ENCODE measurements at regions of chr3 and their contacts with region 1.

Region 1: GRCh38 chr3:193592944-193593667 is at the start of gene OPA1:
- DNase-seq: peak; percentile 96
- H3K4me3 Mint-ChIP-seq: peak within 1 kb of the TSS; percentile 93
- H3K27ac Mint-ChIP-seq: peak within 1 kb of the TSS; percentile 98
- H3K4me1 Mint-ChIP-seq: peaks cover 46% of the 10 kb centered on the region
- H3K27me3 Mint-ChIP-seq: no peaks in the 10 kb centered on the region
- total RNA-seq, gene OPA1: 91.7 to 96.0 TPM

Region 2: GRCh38 chr3:192887047-192887446 is 706.1 kb before region 1 on chr3:
- CTCF ChIA-PET with region 1: no interaction called
- intact Hi-C with region 1: loop called (anchors 5 kb)
- DNase-seq: peak; percentile 36
- H3K4me3 Mint-ChIP-seq: no peak overlapping the region
- H3K27ac Mint-ChIP-seq: peak overlapping the region; percentile 82
- H3K4me1 Mint-ChIP-seq: peaks cover 59% of the 10 kb centered on the region
- H3K27me3 Mint-ChIP-seq: peaks cover 7% of the 10 kb centered on the region

Region 3: GRCh38 chr3:193509103-193509965 is 83.8 kb before region 1 on chr3:
- CTCF ChIA-PET with region 1: no interaction called
- intact Hi-C with region 1: no loop called
- DNase-seq: no peak
- H3K4me3 Mint-ChIP-seq: no peak overlapping the region
- H3K27ac Mint-ChIP-seq: no peak overlapping the region
- H3K4me1 Mint-ChIP-seq: no peaks in the 10 kb centered on the region
- H3K27me3 Mint-ChIP-seq: no peaks in the 10 kb centered on the region

Region 4: DNA sequence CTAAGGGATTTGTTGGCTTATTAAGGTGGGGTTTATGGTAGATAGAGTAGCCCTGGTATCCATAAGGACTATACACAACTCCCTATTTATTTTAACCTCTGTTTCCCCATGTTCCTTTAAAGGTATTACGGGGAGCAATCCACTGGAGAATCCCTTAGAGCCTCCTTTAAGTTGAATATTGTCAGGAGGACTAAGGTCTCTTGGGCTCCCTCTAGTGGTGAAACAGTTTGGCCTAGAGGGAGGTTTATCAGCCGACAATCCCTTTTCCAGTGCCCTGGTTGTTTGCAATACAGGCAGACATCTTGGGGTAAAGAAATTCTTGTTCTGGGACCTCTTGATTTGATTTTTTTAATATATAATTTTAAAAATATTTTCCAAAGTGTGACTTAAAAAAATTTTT is 12.8 kb after region 1 on chr3:
- CTCF ChIA-PET with region 1: no interaction called
- intact Hi-C with region 1: loop called (anchors 1 kb)
- DNase-seq: peak; percentile 61
- H3K4me3 Mint-ChIP-seq: no peak overlapping the region
- H3K27ac Mint-ChIP-seq: no peak overlapping the region
- H3K4me1 Mint-ChIP-seq: peaks cover 34% of the 10 kb centered on the region
- H3K27me3 Mint-ChIP-seq: no peaks in the 10 kb centered on the region

Region 5: DNA sequence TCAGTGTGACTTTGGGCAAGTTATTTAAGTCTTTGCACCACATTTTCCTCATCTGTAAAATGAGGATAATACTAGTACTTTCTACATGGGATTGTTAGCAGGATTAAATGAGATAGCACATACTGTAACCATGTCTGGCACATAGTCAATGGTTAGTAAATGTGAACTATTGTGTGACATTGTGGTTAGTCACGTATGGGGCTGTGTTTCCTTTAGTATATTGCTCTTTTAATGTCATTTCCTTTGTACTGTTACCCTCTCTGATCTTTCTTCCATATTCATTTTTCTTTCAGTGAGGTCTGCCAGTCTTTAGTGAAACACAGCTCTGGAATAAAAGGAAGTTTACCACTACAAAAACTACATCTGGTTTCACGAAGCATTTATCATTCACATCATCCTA is 21.3 kb after region 1 on chr3:
- CTCF ChIA-PET with region 1: no interaction called
- intact Hi-C with region 1: loop called (anchors 2 kb)
- DNase-seq: no peak
- H3K4me3 Mint-ChIP-seq: no peak overlapping the region
- H3K27ac Mint-ChIP-seq: peak overlapping the region; percentile 33
- H3K4me1 Mint-ChIP-seq: peaks cover 24% of the 10 kb centered on the region
- H3K27me3 Mint-ChIP-seq: no peaks in the 10 kb centered on the region

Region 6: GRCh38 chr3:194141415-194142155 is 548.5 kb after region 1 on chr3:
- CTCF ChIA-PET with region 1: no interaction called
- intact Hi-C with region 1: loop called (anchors 1 kb)
- DNase-seq: peak; percentile 86
- H3K4me3 Mint-ChIP-seq: peak overlapping the region; percentile 72
- H3K27ac Mint-ChIP-seq: peak overlapping the region; percentile 91
- H3K4me1 Mint-ChIP-seq: peaks cover 21% of the 10 kb centered on the region
- H3K27me3 Mint-ChIP-seq: peaks cover 34% of the 10 kb centered on the region

Measured in activated naive CD4-positive, alpha-beta T cell treated with anti-CD3 and anti-CD28 coated beads for 36 hours (primary cell).